H1 (cell line): ENCODE measurements at regions of chr7 and their contacts with region 1.

Region 1: GRCh38 chr7:73701357-73701995 is 18.0 kb downstream of the STX1A start:
- DNase-seq: peak; percentile 53 to 92
- H3K4me3 ChIP-seq: no peak overlapping the region
- H3K27ac ChIP-seq: no peak overlapping the region
- H3K4me1 ChIP-seq: peaks cover 0 to 19% (median 15%) of the 10 kb centered on the region in 4 experiments; a peak in 6 of 7 replicates
- H3K27me3 ChIP-seq: no peaks in the 10 kb centered on the region; a peak in 1 of 7 replicates
- CTCF ChIP-seq: peak in 2 of 3 experiments; percentile 75 to 91; a peak in 3 of 4 replicates
- EP300 ChIP-seq: no peak
- POLR2A ChIP-seq: no peak
- RAD21 ChIP-seq: peak; percentile 65 to 66

Region 2: GRCh38 chr7:73628504-73628903 is 73.0 kb before region 1 on chr7:
- CTCF ChIA-PET with region 1: interaction called, 11 read pairs
- POLR2A ChIA-PET with region 1: interaction called, 4 read pairs
- DNase-seq: no peak
- H3K4me3 ChIP-seq: no peak overlapping the region
- H3K27ac ChIP-seq: no peak overlapping the region
- H3K4me1 ChIP-seq: peaks cover 0 to 4% (median 1%) of the 10 kb centered on the region in 4 experiments; a peak in 4 of 7 replicates
- H3K27me3 ChIP-seq: peaks cover 0 to 7% (median 7%) of the 10 kb centered on the region in 4 experiments; a peak in 5 of 7 replicates
- CTCF ChIP-seq: no peak
- EP300 ChIP-seq: no peak
- POLR2A ChIP-seq: no peak
- RAD21 ChIP-seq: no peak

Region 3: GRCh38 chr7:73683056-73683964 is 18.2 kb before region 1 on chr7 and contains the starts of genes BUD23 and DNAJC30:
- CTCF ChIA-PET with region 1: interaction called, 18 read pairs
- POLR2A ChIA-PET with region 1: interaction called, 37 read pairs
- DNase-seq: peak; percentile 89 to 94
- H3K4me3 ChIP-seq: peak within 1 kb of the TSS; percentile 82 to 99 (median 95)
- H3K27ac ChIP-seq: peak within 1 kb of the TSS; percentile 89
- H3K4me1 ChIP-seq: peaks cover 3 to 7% (median 3%) of the 10 kb centered on the region in 4 experiments; a peak in 5 of 7 replicates
- H3K27me3 ChIP-seq: no peaks in the 10 kb centered on the region; a peak in 1 of 7 replicates
- CTCF ChIP-seq: no peak; a peak in 1 of 4 replicates
- EP300 ChIP-seq: no peak
- POLR2A ChIP-seq: peak; percentile 95 to 98
- RAD21 ChIP-seq: no peak
- total RNA-seq, gene BUD23: 72.2 and 78.4 TPM in 2 replicates
- total RNA-seq, gene DNAJC30: 6.0 and 6.1 TPM in 2 replicates

Region 4: DNA sequence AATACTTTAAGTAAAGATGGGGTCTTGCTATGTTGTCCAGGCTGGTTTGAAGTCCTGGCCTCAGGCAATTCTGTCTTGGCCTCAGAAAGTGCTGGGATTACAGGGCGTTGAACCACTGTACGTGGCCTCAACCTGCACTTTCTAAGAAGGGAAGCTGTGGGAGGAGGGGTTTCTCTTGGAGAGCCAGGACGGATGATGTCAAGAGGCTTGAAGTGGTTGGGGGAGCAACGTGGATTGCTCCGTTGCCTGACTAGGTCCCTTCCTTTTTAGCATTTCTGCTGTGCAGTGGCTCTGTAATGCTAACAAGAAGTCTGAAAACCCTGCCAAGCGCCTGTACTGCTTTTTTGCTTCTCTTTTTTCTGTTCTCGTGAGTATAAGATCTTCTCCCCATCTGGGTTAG is 10.8 kb before region 1 on chr7:
- CTCF ChIA-PET with region 1: interaction called, 22 read pairs
- POLR2A ChIA-PET with region 1: interaction called, 37 read pairs
- DNase-seq: no peak
- H3K4me3 ChIP-seq: no peak overlapping the region
- H3K27ac ChIP-seq: no peak overlapping the region
- H3K4me1 ChIP-seq: no peaks in the 10 kb centered on the region
- H3K27me3 ChIP-seq: no peaks in the 10 kb centered on the region
- CTCF ChIP-seq: no peak
- EP300 ChIP-seq: no peak
- POLR2A ChIP-seq: no peak
- RAD21 ChIP-seq: no peak

Region 5: GRCh38 chr7:73712773-73713172 is 11.3 kb after region 1 on chr7:
- CTCF ChIA-PET with region 1: interaction called, 10 read pairs
- POLR2A ChIA-PET with region 1: interaction called, 13 read pairs
- DNase-seq: no peak
- H3K4me3 ChIP-seq: no peak overlapping the region
- H3K27ac ChIP-seq: no peak overlapping the region
- H3K4me1 ChIP-seq: no peaks in the 10 kb centered on the region; a peak in 4 of 7 replicates
- H3K27me3 ChIP-seq: peaks cover 0 to under 1% (median 0%) of the 10 kb centered on the region in 4 experiments; a peak in 1 of 7 replicates
- CTCF ChIP-seq: no peak
- EP300 ChIP-seq: no peak
- POLR2A ChIP-seq: no peak
- RAD21 ChIP-seq: no peak

Region 6: DNA sequence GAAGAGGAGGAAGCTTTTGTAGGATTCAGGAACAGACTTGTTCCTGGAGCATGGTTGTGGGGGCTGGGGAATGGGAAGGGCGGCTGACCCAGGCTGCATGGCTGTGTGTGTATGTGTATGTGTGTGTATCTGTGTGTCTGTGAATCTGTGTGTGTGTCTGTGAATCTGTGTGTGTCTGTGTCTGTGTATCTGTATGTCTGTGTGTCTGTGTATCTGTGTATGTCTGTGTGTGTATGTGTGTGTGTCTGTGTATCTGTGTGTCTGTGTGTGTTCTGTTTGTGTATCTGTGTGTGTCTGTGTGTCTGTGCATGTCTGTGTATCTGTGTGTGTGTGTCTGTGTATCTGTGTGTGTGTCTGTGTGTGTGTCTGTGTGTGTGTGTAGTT is 24.6 kb after region 1 on chr7:
- CTCF ChIA-PET with region 1: interaction called, 45 read pairs
- POLR2A ChIA-PET with region 1: interaction called, 6 read pairs
- DNase-seq: no peak
- H3K4me3 ChIP-seq: no peak overlapping the region
- H3K27ac ChIP-seq: no peak overlapping the region
- H3K4me1 ChIP-seq: no peaks in the 10 kb centered on the region
- H3K27me3 ChIP-seq: no peaks in the 10 kb centered on the region; a peak in 1 of 7 replicates
- CTCF ChIP-seq: no peak
- EP300 ChIP-seq: no peak
- POLR2A ChIP-seq: no peak
- RAD21 ChIP-seq: no peak

Region 7: DNA sequence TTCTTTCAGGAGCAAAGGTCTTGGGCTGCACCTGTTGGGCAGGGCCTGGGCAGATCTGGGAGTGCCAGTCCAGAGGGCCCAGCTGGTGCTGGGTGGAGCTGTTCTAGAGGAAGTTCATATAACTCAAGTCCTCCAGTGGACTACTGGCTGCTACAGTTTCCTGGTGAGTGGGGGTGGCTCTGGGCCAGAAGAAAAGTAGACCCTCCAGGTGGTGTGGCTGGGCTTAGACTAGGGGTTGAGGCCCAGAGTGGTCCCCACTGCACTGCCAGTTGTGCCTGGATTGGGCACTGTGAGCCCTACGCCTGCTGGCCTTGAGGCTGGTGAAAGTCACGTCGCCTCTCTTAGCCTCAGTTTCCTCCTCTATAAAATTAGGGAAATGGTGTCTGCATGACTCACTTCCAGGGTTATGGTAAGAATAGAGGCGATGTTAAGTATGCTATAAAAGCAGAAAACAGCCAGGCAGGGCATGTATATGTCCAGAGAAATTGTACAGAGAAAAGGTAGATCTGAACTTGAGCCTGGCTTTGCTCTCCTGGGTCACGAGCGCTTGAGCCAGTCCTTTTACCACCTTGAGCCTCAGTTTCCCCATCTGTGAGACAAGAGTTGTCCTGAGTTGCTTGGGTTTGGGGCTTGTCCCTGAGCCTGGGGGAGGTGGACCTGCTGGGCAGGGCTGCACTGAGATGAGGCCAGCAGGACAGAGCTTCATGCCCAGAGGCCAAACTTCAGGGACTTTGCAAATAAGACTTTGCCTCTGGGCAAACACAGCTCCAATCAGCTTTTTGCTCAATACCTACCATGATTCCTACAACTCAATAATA is 72.4 kb after region 1 on chr7:
- CTCF ChIA-PET with region 1: no interaction called
- POLR2A ChIA-PET with region 1: no interaction called
- DNase-seq: no peak
- H3K4me3 ChIP-seq: no peak overlapping the region
- H3K27ac ChIP-seq: no peak overlapping the region
- H3K4me1 ChIP-seq: peaks cover 0 to 10% (median 8%) of the 10 kb centered on the region in 4 experiments; a peak in 6 of 7 replicates
- H3K27me3 ChIP-seq: peaks cover 0 to 3% (median 0%) of the 10 kb centered on the region in 4 experiments; a peak in 3 of 7 replicates
- CTCF ChIP-seq: no peak
- EP300 ChIP-seq: no peak
- POLR2A ChIP-seq: no peak
- RAD21 ChIP-seq: no peak

Region 8: DNA sequence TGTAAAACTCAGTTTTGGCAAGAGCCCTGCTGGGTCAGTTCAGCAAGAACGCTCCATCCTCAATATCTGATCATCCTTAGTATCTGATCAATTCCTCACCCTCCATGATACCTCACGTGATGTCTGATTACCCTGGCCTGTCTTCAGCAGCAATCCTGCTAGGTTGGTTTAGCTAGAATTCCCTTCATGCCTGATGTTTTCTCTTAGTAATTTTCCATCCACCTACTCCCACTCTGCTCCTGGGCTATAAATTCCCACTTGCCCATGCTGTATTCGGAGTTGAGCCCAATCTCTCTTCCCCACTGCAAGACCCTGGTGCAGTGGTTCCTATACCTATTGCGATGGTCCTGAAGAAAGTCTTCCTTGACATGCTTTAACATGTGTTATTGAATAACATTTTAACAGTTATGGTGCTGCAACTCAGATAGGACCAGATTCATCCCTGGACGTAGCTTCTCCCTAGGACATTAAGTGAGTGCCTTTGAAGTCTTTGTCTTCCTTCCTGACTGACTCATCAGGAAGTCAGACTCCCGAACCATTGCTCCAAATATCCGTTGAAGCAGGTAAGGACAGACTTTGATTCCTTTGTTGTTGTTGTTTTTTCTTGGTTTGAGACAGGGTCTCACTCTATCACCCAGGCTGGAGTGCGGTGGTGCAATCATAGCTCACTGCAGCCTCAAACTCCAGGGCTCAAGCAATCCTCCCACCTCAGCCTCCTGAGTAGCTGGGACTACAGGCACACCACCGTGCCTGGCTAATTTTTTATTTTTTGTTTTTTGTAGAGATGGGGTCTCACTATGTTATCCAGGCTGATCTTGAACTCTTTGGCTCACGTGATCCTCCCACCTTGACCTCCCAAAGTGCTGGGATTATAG is 98.0 kb after region 1 on chr7:
- CTCF ChIA-PET with region 1: no interaction called
- POLR2A ChIA-PET with region 1: no interaction called
- DNase-seq: peak in 1 of 2 experiments; percentile 39
- H3K4me3 ChIP-seq: no peak overlapping the region
- H3K27ac ChIP-seq: no peak overlapping the region
- H3K4me1 ChIP-seq: peaks cover 0 to 6% (median 0%) of the 10 kb centered on the region in 4 experiments; a peak in 1 of 7 replicates
- H3K27me3 ChIP-seq: no peaks in the 10 kb centered on the region
- CTCF ChIP-seq: no peak
- EP300 ChIP-seq: no peak
- POLR2A ChIP-seq: no peak
- RAD21 ChIP-seq: no peak

Region 9: DNA sequence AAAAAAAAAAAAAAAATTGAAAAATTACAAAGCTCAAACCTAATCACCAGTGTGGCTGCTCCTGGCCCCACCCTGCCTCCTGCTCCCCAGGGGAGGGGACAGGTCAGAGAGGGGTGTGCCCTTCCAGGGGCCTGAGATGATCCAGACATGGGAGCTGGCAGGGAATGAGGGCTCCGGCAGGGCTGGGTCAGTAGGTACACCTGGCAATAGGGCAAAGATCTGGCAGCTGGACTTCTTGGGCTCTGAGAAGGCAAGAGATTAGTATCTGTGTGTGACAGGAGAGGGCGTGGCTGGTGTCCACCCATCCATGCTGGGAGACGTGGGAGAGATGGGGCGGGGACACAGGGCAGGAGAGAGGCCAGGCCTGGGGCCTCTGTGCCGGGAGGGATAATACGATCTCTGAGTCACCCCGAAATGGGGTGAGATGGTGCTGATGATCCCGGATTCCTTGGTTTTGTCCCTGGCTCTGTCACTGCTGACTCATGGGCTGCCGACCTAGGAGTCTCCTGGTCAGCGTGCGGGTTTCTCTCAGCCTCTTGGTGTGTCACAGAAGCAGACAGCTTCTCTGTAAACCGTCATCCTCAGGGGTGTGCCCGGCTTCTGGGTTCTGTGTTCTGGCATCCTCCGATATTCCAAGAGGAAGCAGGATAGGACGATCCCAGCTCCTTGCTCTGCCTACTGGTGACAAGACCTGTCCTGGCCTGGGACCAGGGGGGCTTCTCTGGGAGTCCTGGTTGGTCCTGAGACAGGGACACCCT is 121.0 kb after region 1 on chr7:
- CTCF ChIA-PET with region 1: no interaction called
- POLR2A ChIA-PET with region 1: no interaction called
- DNase-seq: no peak
- H3K4me3 ChIP-seq: no peak overlapping the region
- H3K27ac ChIP-seq: no peak overlapping the region
- H3K4me1 ChIP-seq: peaks cover 2 to 5% (median 3%) of the 10 kb centered on the region in 4 experiments
- H3K27me3 ChIP-seq: peaks cover 0 to 5% (median 0%) of the 10 kb centered on the region in 4 experiments; a peak in 1 of 7 replicates
- CTCF ChIP-seq: no peak
- EP300 ChIP-seq: no peak
- POLR2A ChIP-seq: no peak
- RAD21 ChIP-seq: no peak

Region 10: GRCh38 chr7:73894733-73895551 is 193.5 kb after region 1 on chr7:
- CTCF ChIA-PET with region 1: no interaction called
- POLR2A ChIA-PET with region 1: no interaction called
- DNase-seq: no peak
- H3K4me3 ChIP-seq: no peak overlapping the region
- H3K27ac ChIP-seq: no peak overlapping the region
- H3K4me1 ChIP-seq: peaks cover 0 to 4% (median 0%) of the 10 kb centered on the region in 4 experiments; a peak in 1 of 7 replicates
- H3K27me3 ChIP-seq: no peaks in the 10 kb centered on the region
- CTCF ChIP-seq: no peak
- EP300 ChIP-seq: no peak
- POLR2A ChIP-seq: no peak
- RAD21 ChIP-seq: no peak